ENCODE measurements at regions of chr6 and their contacts with region 1.

Region 1: GRCh38 chr6:134174672-134175198 is 122.3 kb upstream of the SLC2A12 start:
- DNase-seq: peak; percentile 95 to 97 (median 97)
- H3K4me3 ChIP-seq: peak overlapping the region; percentile 86
- H3K27ac ChIP-seq: peak overlapping the region; percentile 81 to 97
- H3K4me1 ChIP-seq: peaks cover 7% of the 10 kb centered on the region
- H3K27me3 ChIP-seq: no peaks in the 10 kb centered on the region
- CTCF ChIP-seq: peak; percentile 4 to 14 (median 5)
- EP300 ChIP-seq: no peak
- POLR2A ChIP-seq: peak; percentile 94

Region 2: GRCh38 chr6:134063966-134064445 is 110.7 kb before region 1 on chr6:
- intact Hi-C with region 1: no loop called
- DNase-seq: peak; percentile 46 to 71 (median 52)
- H3K4me3 ChIP-seq: no peak overlapping the region
- H3K27ac ChIP-seq: no peak overlapping the region
- H3K4me1 ChIP-seq: no peaks in the 10 kb centered on the region
- H3K27me3 ChIP-seq: no peaks in the 10 kb centered on the region
- CTCF ChIP-seq: peak; percentile 16 to 60 (median 49)
- EP300 ChIP-seq: no peak
- POLR2A ChIP-seq: no peak

Region 3: GRCh38 chr6:134253681-134254080 is 78.9 kb after region 1 on chr6:
- intact Hi-C with region 1: loop called in 1 of 4 experiments (anchors 5 kb)
- DNase-seq: peak in 1 of 5 donors; percentile 48
- H3K4me3 ChIP-seq: no peak overlapping the region
- H3K27ac ChIP-seq: peak overlapping the region in 1 of 2 donors; percentile 52
- H3K4me1 ChIP-seq: peaks cover 21% of the 10 kb centered on the region
- H3K27me3 ChIP-seq: no peaks in the 10 kb centered on the region
- CTCF ChIP-seq: no peak
- EP300 ChIP-seq: no peak
- POLR2A ChIP-seq: no peak

Region 4: GRCh38 chr6:134317471-134318131 is 142.9 kb after region 1 on chr6 and contains the start of gene SGK1:
- intact Hi-C with region 1: loop called in 3 of 4 experiments (anchors 5 kb)
- DNase-seq: peak; percentile 68 to 78 (median 73)
- H3K4me3 ChIP-seq: peak within 1 kb of the TSS; percentile 42
- H3K27ac ChIP-seq: peak within 1 kb of the TSS; percentile 68 to 83
- H3K4me1 ChIP-seq: peaks cover 6% of the 10 kb centered on the region
- H3K27me3 ChIP-seq: no peaks in the 10 kb centered on the region
- CTCF ChIP-seq: peak in 1 of 3 donors; percentile 14
- EP300 ChIP-seq: no peak
- POLR2A ChIP-seq: peak; percentile 44
- total RNA-seq, gene SGK1: 145 to 610 (median 279) TPM

Region 5: GRCh38 chr6:134517145-134517658 is 342.5 kb after region 1 on chr6:
- intact Hi-C with region 1: loop called in 1 of 4 experiments (anchors 10 kb)
- DNase-seq: peak; percentile 67 to 81 (median 75)
- H3K4me3 ChIP-seq: no peak overlapping the region
- H3K27ac ChIP-seq: peak overlapping the region in 1 of 2 donors; percentile 36
- H3K4me1 ChIP-seq: peaks cover 12% of the 10 kb centered on the region
- H3K27me3 ChIP-seq: no peaks in the 10 kb centered on the region
- CTCF ChIP-seq: no peak
- EP300 ChIP-seq: no peak
- POLR2A ChIP-seq: no peak

Region 6: DNA sequence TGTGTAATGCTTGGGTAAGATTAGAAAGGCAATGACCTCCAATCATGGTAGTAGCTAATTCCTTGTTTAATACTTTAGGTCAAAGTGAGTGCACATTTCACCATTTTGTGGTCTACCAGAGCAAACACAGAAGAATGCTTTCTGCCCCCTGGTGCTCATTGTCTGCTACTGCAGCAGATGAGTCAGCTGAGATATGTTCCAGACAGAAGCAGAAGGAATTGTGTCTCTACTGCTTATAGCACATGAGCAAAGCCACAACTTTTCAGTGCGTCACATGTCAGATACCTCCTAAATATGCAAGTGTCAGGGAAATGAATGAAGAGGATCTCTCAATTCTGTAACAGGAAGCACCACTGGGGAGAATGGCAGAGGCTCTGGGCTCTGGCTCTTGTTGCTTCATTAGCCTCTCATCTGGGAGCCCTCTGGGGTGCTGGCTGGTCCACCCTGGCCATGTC is 466.3 kb after region 1 on chr6:
- intact Hi-C with region 1: loop called (anchors 2 to 5 kb)
- DNase-seq: peak; percentile 66 to 87 (median 77)
- H3K4me3 ChIP-seq: no peak overlapping the region
- H3K27ac ChIP-seq: no peak overlapping the region
- H3K4me1 ChIP-seq: peaks cover 3% of the 10 kb centered on the region
- H3K27me3 ChIP-seq: no peaks in the 10 kb centered on the region
- CTCF ChIP-seq: peak; percentile 73 to 93 (median 84)
- EP300 ChIP-seq: no peak
- POLR2A ChIP-seq: no peak

Region 7: GRCh38 chr6:134822920-134823709 is 648.4 kb after region 1 on chr6:
- intact Hi-C with region 1: loop called (anchors 2 to 10 kb)
- DNase-seq: peak; percentile 42 to 58 (median 47)
- H3K4me3 ChIP-seq: no peak overlapping the region
- H3K27ac ChIP-seq: peak overlapping the region in 1 of 2 donors; percentile 26
- H3K4me1 ChIP-seq: peaks cover 10% of the 10 kb centered on the region
- H3K27me3 ChIP-seq: no peaks in the 10 kb centered on the region
- CTCF ChIP-seq: peak; percentile 73 to 95 (median 92)
- EP300 ChIP-seq: no peak
- POLR2A ChIP-seq: no peak

Region 8: DNA sequence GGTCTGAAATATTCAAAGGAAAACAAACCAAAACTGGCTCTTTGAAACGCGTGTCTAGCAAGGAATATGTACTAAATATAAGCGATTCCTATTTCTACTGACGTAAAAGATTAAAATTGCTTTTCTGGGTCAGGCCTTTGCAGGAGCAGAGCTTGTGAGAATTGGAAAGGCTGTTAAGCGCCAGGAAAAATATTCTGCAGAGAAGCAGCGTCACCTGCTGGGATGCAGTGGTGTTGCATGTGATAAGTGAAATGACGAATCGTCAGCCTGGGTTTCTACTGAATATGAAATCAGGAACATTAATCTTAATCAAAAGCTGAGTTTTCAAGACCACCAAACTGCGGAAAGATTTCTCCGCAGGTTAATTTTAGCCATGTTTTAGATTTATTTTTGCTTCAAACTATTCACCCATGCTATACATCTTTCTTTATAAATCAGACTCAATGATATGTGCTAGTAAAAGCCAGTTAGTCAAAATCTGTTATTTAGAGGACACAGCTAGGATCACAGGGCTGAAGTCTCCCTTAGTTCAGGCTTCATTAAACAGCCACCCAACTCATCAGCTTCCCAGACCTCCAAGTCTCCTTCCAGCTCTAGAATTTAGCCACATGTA is 707.8 kb after region 1 on chr6:
- intact Hi-C with region 1: loop called in 2 of 4 experiments (anchors 5 to 10 kb)
- DNase-seq: peak; percentile 48 to 84 (median 79)
- H3K4me3 ChIP-seq: no peak overlapping the region
- H3K27ac ChIP-seq: peak overlapping the region in 1 of 2 donors; percentile 27
- H3K4me1 ChIP-seq: no peaks in the 10 kb centered on the region
- H3K27me3 ChIP-seq: no peaks in the 10 kb centered on the region
- CTCF ChIP-seq: peak; percentile 81 to 95 (median 86)
- EP300 ChIP-seq: no peak
- POLR2A ChIP-seq: no peak